ENCODE measurements at regions of chr7 and their contacts with region 1.

Region 1: GRCh38 chr7:82534683-82535082 is 91.1 kb upstream of the CACNA2D1 start:
- DNase-seq: no peak
- H3K4me3 ChIP-seq: no peak overlapping the region
- CTCF ChIP-seq: no peak
- POLR2A ChIP-seq: no peak

Region 2: GRCh38 chr7:83271212-83272099 is 736.8 kb after region 1 on chr7:
- intact Hi-C with region 1: loop called (anchors 5 kb)
- DNase-seq: no peak
- H3K4me3 ChIP-seq: no peak overlapping the region
- CTCF ChIP-seq: no peak
- POLR2A ChIP-seq: no peak

Measured in lower leg skin (tissue), 4 donors.